ENCODE measurements at regions of chr16 and their contacts with region 1.

Region 1: DNA sequence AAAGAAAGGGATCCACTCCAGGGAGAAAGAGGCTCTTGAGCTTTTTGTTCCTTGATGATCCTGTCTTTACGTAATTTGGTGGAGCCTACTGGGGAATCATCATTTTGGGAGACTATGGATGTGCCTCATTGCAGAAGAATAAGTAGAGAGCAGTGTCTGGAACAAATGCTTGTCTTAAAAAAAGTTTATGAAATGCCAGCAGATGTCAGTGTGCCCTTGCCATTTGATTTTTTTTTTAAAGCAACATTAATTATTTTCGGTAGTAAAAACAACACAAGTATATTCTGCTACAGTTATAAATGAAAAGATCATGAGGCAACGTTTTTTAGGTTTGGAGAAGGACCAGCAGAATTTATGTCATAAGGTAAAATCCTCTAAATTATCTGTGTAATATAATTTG is 934.8 kb upstream of the EEF2KMT start:
- DNase-seq: no peak
- ATAC-seq: no peak
- H3K4me3 ChIP-seq: no peak overlapping the region
- H3K27ac ChIP-seq: no peak overlapping the region
- H3K4me1 ChIP-seq: no peaks in the 10 kb centered on the region
- H3K27me3 ChIP-seq: no peaks in the 10 kb centered on the region; the same call in 1 of the 2 replicates
- CTCF ChIP-seq: no peak; the same call in 1 of the 2 replicates

Region 2: GRCh38 chr16:6643080-6643686 is 610.7 kb after region 1 on chr16:
- CTCF ChIA-PET with region 1: no interaction called
- POLR2A ChIA-PET with region 1: no interaction called
- in situ Hi-C with region 1: no loop called
- intact Hi-C with region 1: loop called (anchors 5 kb)
- DNase-seq: peak; percentile 54
- ATAC-seq: no peak
- H3K4me3 ChIP-seq: no peak overlapping the region
- H3K27ac ChIP-seq: no peak overlapping the region
- H3K4me1 ChIP-seq: no peaks in the 10 kb centered on the region
- H3K27me3 ChIP-seq: peaks cover 26% of the 10 kb centered on the region
- CTCF ChIP-seq: peak; percentile 80; the same call in 1 of the 2 replicates

Measured in Panc1 (cell line).